Mammary epithelial cell (primary cell): ENCODE measurements at regions of chr6 and their contacts with region 1.

Region 1: GRCh38 chr6:148177589-148178233 is 164.9 kb upstream of the SASH1 start:
- DNase-seq: peak; percentile 35
- H3K4me3 ChIP-seq: no peak overlapping the region
- H3K27ac ChIP-seq: no peak overlapping the region
- H3K4me1 ChIP-seq: no peaks in the 10 kb centered on the region
- H3K27me3 ChIP-seq: no peaks in the 10 kb centered on the region
- CTCF ChIP-seq: peak; percentile 71 to 79

Region 2: GRCh38 chr6:148192310-148192709 is 14.6 kb after region 1 on chr6:
- CTCF ChIA-PET with region 1: interaction called, 13 read pairs
- dilution Hi-C with region 1: no loop called
- in situ Hi-C with region 1: no loop called
- intact Hi-C with region 1: no loop called
- DNase-seq: peak; percentile 86
- H3K4me3 ChIP-seq: peak overlapping the region in 1 of 3 experiments; percentile 6
- H3K27ac ChIP-seq: peak overlapping the region; percentile 89
- H3K4me1 ChIP-seq: peaks cover 40% of the 10 kb centered on the region
- H3K27me3 ChIP-seq: no peaks in the 10 kb centered on the region
- CTCF ChIP-seq: no peak

Region 3: DNA sequence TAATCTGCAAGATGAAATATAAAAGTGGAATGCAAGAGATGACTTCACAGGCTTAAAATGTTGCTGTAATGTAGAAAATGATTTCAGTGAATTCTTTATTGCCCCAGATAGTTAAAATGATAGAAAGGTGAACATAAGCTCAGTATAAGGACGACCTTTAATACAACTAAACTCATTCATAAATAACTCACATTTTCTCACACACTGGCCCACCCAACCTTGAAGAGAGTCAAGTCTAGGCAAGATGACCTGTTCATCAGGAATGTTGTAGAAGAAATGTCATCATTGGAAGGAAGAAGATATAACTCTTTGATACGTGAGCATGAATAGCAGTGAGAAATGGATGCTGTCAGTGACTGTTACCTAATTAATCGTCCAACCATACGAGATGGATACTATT is 53.9 kb after region 1 on chr6:
- CTCF ChIA-PET with region 1: interaction called, 6 read pairs
- dilution Hi-C with region 1: no loop called
- in situ Hi-C with region 1: loop called in 1 of 2 experiments (anchors 10 kb)
- intact Hi-C with region 1: no loop called
- DNase-seq: peak; percentile 73
- H3K4me3 ChIP-seq: no peak overlapping the region
- H3K27ac ChIP-seq: peak overlapping the region; percentile 10
- H3K4me1 ChIP-seq: peaks cover 26% of the 10 kb centered on the region
- H3K27me3 ChIP-seq: no peaks in the 10 kb centered on the region
- CTCF ChIP-seq: no peak

Region 4: GRCh38 chr6:148250975-148251685 is 73.4 kb after region 1 on chr6:
- CTCF ChIA-PET with region 1: interaction called, 14 read pairs
- dilution Hi-C with region 1: loop called (anchors 5 kb)
- in situ Hi-C with region 1: loop called in 1 of 2 experiments (anchors 5 kb)
- intact Hi-C with region 1: loop called (anchors 1 kb)
- DNase-seq: peak; percentile 52
- H3K4me3 ChIP-seq: no peak overlapping the region
- H3K27ac ChIP-seq: no peak overlapping the region
- H3K4me1 ChIP-seq: no peaks in the 10 kb centered on the region
- H3K27me3 ChIP-seq: no peaks in the 10 kb centered on the region
- CTCF ChIP-seq: peak; percentile 47 to 74

Region 5: GRCh38 chr6:148464319-148465010 is 286.8 kb after region 1 on chr6:
- CTCF ChIA-PET with region 1: no interaction called
- dilution Hi-C with region 1: no loop called
- in situ Hi-C with region 1: loop called (anchors 10 kb)
- intact Hi-C with region 1: loop called (anchors 1 kb)
- DNase-seq: peak; percentile 42
- H3K4me3 ChIP-seq: no peak overlapping the region
- H3K27ac ChIP-seq: no peak overlapping the region
- H3K4me1 ChIP-seq: no peaks in the 10 kb centered on the region
- H3K27me3 ChIP-seq: no peaks in the 10 kb centered on the region
- CTCF ChIP-seq: peak; percentile 85 to 97

Region 6: DNA sequence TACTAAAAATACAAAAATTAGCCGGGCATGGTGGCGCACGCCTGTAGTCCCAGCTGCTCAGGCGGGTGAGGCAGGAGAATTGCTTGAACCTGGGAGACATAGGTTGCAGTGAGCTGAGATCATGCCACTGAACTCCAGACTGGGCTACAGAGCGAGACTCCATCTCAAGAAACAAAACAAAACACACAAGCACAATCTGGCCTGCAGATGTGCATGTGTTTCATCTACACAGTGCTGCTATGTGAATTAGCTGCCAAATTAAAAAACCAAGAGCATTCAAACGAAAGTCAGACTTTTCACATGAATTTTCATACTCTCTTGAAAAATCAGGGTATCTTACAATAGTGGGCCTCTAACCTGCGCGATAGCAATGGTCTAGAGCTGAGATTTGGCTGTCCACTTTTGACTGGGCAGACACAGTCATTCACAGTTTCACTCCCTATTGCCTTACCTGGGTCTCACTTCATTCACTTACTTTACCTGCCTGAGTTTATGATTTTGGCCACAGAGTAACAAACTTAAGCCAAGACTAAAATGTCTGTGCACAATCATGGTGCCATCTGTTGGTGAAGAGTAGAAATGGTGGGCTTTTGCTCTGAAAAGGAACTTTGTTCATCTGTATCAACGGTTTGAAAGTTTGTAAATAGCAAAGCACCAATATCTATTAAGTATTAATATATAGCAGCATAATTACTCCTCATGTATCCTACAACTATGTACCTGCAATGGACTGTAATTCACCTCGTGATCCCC is 430.7 kb after region 1 on chr6:
- CTCF ChIA-PET with region 1: no interaction called
- dilution Hi-C with region 1: no loop called
- in situ Hi-C with region 1: no loop called
- intact Hi-C with region 1: loop called (anchors 5 kb)
- DNase-seq: peak; percentile 30
- H3K4me3 ChIP-seq: no peak overlapping the region
- H3K27ac ChIP-seq: no peak overlapping the region
- H3K4me1 ChIP-seq: no peaks in the 10 kb centered on the region
- H3K27me3 ChIP-seq: peaks cover 2% of the 10 kb centered on the region
- CTCF ChIP-seq: peak; percentile 48 to 53